B cell (primary cell): ENCODE measurements at regions of chr12 and their contacts with region 1.

Region 1: DNA sequence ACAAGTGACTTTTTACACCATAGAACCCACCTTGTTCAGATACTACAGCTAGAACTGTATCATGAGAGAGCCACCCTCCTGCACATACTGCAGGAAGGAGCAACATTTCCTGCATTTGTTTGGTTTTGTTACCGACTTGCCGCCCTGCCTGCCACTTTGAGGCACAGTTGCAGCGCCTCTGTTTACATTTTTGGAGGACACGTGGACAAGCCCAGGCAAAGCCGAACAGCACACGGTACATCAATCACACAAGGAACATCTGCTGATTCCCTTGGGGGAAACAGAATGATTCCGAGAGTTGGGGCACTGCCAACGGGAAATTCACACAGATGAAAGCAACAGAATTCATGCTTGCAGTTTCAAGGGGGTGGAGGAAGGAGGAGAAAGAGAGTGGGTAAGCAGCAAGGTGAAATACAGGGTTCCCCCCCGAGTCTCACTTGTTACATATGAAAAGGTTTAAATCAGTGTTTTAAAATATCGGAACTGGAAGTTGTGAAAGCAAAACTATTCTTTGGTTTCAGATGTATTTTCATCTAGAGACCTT is 110.7 kb downstream of the BTG1 start:
- DNase-seq: peak; percentile 86
- ATAC-seq: peak; percentile 76
- H3K4me3 ChIP-seq: peak overlapping the region; percentile 32 to 60 (median 52)
- H3K4me3 Mint-ChIP-seq: peak overlapping the region; percentile 85
- H3K27ac ChIP-seq: peak overlapping the region; percentile 61 to 75
- H3K27ac Mint-ChIP-seq: peak overlapping the region; percentile 79
- H3K4me1 ChIP-seq: peaks cover 29 to 40% of the 10 kb centered on the region in 2 donors
- H3K4me1 Mint-ChIP-seq: peaks cover 53% of the 10 kb centered on the region
- H3K27me3 ChIP-seq: no peaks in the 10 kb centered on the region
- H3K27me3 Mint-ChIP-seq: no peaks in the 10 kb centered on the region
- CTCF ChIP-seq: no peak

Region 2: GRCh38 chr12:91991399-91992187 is 43.3 kb before region 1 on chr12:
- CTCF ChIA-PET with region 1: interaction called, 3 read pairs
- POLR2A ChIA-PET with region 1: no interaction called
- intact Hi-C with region 1: loop called (anchors 5 kb)
- DNase-seq: peak; percentile 58
- ATAC-seq: peak; percentile 61
- H3K4me3 ChIP-seq: no peak overlapping the region
- H3K4me3 Mint-ChIP-seq: no peak overlapping the region
- H3K27ac ChIP-seq: no peak overlapping the region
- H3K27ac Mint-ChIP-seq: no peak overlapping the region
- H3K4me1 ChIP-seq: no peaks in the 10 kb centered on the region
- H3K4me1 Mint-ChIP-seq: peaks cover 3% of the 10 kb centered on the region
- H3K27me3 ChIP-seq: no peaks in the 10 kb centered on the region
- H3K27me3 Mint-ChIP-seq: no peaks in the 10 kb centered on the region
- CTCF ChIP-seq: peak; percentile 34

Region 3: DNA sequence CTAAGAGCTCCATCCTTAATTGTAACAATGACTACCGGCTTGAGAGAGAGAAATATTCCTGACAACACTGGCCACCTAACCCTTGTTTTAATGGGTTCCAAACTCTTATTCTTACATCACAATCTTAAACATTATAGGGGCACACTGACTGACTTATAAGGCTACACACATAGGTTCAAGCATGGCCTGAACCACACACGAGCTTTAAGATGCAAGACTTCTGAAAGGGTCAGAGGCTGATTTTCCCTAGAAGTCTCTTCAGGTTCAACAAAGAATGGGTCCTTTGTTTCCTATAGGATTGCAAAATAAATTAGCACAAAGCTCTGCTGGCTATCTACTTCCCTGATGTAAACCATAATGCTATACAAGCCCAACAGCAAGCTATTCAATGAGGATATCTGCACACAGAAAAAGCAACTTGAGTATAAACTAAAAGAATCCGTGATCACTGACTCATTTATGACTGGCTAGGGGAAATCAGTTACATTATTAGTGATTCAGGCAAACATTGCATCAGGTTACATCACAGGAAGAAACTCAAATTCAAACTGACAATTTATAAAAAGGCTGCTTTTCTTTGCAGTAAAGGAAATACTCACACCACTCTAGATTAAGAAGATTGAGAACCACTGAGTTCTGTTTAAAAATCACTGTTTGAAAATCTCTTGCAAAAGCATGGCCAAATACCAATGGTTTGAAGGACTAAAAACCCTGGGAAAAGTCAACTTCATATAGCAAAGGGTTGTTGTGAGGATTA is 102.2 kb after region 1 on chr12:
- CTCF ChIA-PET with region 1: interaction called, 5 read pairs
- POLR2A ChIA-PET with region 1: no interaction called
- intact Hi-C with region 1: loop called (anchors 2 kb)
- DNase-seq: no peak
- ATAC-seq: no peak
- H3K4me3 ChIP-seq: peak overlapping the region; percentile 28 to 100 (median 96)
- H3K4me3 Mint-ChIP-seq: peak overlapping the region; percentile 98
- H3K27ac ChIP-seq: peak overlapping the region in 1 of 2 donors; percentile 13
- H3K27ac Mint-ChIP-seq: peak overlapping the region; percentile 23
- H3K4me1 ChIP-seq: peaks cover 71 to 80% of the 10 kb centered on the region in 2 donors
- H3K4me1 Mint-ChIP-seq: peaks cover 74% of the 10 kb centered on the region
- H3K27me3 ChIP-seq: no peaks in the 10 kb centered on the region
- H3K27me3 Mint-ChIP-seq: no peaks in the 10 kb centered on the region
- CTCF ChIP-seq: no peak